Gastrocnemius medialis (tissue), 4 donors: ENCODE measurements at regions of chr10 and their contacts with region 1.

Region 1: GRCh38 chr10:95406651-95407280 is 116.0 kb upstream of the PDLIM1 start:
- DNase-seq: peak; percentile 94 to 96
- ATAC-seq: peak; percentile 85 to 92
- H3K4me3 ChIP-seq: peak overlapping the region in 1 of 4 donors; percentile 14
- H3K27ac ChIP-seq: peak overlapping the region; percentile 91 to 98 (median 97)
- H3K4me1 ChIP-seq: peaks cover 73 to 77% of the 10 kb centered on the region in 2 donors
- H3K27me3 ChIP-seq: no peaks in the 10 kb centered on the region
- CTCF ChIP-seq: no peak
- POLR2A ChIP-seq: peak; percentile 64 to 89

Region 2: DNA sequence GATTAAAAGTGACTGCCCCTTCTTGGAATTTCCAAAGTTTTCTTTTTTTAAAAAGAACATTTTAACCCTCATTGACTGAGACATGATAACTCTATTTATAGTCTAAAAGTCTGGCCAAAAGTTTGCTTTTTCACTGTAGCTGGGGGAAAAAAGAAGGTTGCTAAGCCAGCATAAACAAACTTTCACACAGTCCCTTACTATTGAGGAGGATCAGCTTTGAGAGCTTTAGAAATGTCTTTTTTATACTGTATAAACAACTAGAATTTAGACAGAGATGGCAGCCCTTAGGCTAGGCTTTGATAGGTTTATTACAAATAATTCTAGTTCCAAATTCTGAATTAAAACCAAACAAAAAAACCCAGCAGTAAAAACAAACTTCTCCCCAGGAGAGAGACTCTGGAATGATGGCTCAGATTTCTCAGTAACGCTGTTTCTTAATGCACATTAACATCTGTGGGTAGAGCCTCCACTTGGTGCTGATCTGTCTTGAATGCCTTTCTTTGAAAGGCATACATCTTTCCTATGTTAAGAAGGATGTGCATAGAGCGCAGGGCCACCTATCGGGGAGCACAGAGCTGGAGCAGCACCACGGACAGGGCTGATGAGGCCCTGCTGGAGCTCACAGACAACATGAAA is 15.1 kb before region 1 on chr10:
- in situ Hi-C with region 1: no loop called
- intact Hi-C with region 1: loop called (anchors 1 kb)
- DNase-seq: no peak
- ATAC-seq: no peak
- H3K4me3 ChIP-seq: no peak overlapping the region
- H3K27ac ChIP-seq: peak overlapping the region; percentile 91 to 98 (median 97)
- H3K4me1 ChIP-seq: peaks cover 31% of the 10 kb centered on the region in 2 donors
- H3K27me3 ChIP-seq: no peaks in the 10 kb centered on the region
- CTCF ChIP-seq: no peak
- POLR2A ChIP-seq: no peak